PC-9 (cell line): ENCODE measurements at regions of chr7 and their contacts with region 1.

Region 1: GRCh38 chr7:155344600-155345433 is 47.1 kb downstream of the INSIG1 start:
- DNase-seq: peak; percentile 66 to 84
- H3K4me3 ChIP-seq: peak overlapping the region; percentile 37
- H3K27ac ChIP-seq: no peak overlapping the region
- H3K4me1 ChIP-seq: peaks cover 4% of the 10 kb centered on the region
- H3K27me3 ChIP-seq: peaks cover 50% of the 10 kb centered on the region
- CTCF ChIP-seq: peak; percentile 89

Region 2: GRCh38 chr7:154978017-154978416 is 366.8 kb before region 1 on chr7:
- CTCF ChIA-PET with region 1: interaction called, 10 read pairs
- POLR2A ChIA-PET with region 1: no interaction called
- intact Hi-C with region 1: no loop called
- DNase-seq: no peak
- H3K4me3 ChIP-seq: no peak overlapping the region
- H3K27ac ChIP-seq: no peak overlapping the region
- H3K4me1 ChIP-seq: no peaks in the 10 kb centered on the region
- H3K27me3 ChIP-seq: no peaks in the 10 kb centered on the region
- CTCF ChIP-seq: no peak

Region 3: GRCh38 chr7:155190688-155191087 is 154.1 kb before region 1 on chr7:
- CTCF ChIA-PET with region 1: interaction called, 15 read pairs
- POLR2A ChIA-PET with region 1: no interaction called
- intact Hi-C with region 1: loop called (anchors 1 kb)
- DNase-seq: peak in 1 of 2 experiments; percentile 72
- H3K4me3 ChIP-seq: no peak overlapping the region
- H3K27ac ChIP-seq: no peak overlapping the region
- H3K4me1 ChIP-seq: 0 out of 2 replicates have a peak, but pooled peaks cover 5% of the 10 kb centered on the region
- H3K27me3 ChIP-seq: peaks cover 49% of the 10 kb centered on the region
- CTCF ChIP-seq: peak; percentile 98

Region 4: GRCh38 chr7:155269766-155270585 is 74.8 kb before region 1 on chr7:
- CTCF ChIA-PET with region 1: interaction called, 18 read pairs
- POLR2A ChIA-PET with region 1: no interaction called
- intact Hi-C with region 1: no loop called
- DNase-seq: peak; percentile 72 to 94
- H3K4me3 ChIP-seq: no peak overlapping the region
- H3K27ac ChIP-seq: peak overlapping the region; percentile 63
- H3K4me1 ChIP-seq: peaks cover 22% of the 10 kb centered on the region
- H3K27me3 ChIP-seq: no peaks in the 10 kb centered on the region
- CTCF ChIP-seq: no peak

Region 5: DNA sequence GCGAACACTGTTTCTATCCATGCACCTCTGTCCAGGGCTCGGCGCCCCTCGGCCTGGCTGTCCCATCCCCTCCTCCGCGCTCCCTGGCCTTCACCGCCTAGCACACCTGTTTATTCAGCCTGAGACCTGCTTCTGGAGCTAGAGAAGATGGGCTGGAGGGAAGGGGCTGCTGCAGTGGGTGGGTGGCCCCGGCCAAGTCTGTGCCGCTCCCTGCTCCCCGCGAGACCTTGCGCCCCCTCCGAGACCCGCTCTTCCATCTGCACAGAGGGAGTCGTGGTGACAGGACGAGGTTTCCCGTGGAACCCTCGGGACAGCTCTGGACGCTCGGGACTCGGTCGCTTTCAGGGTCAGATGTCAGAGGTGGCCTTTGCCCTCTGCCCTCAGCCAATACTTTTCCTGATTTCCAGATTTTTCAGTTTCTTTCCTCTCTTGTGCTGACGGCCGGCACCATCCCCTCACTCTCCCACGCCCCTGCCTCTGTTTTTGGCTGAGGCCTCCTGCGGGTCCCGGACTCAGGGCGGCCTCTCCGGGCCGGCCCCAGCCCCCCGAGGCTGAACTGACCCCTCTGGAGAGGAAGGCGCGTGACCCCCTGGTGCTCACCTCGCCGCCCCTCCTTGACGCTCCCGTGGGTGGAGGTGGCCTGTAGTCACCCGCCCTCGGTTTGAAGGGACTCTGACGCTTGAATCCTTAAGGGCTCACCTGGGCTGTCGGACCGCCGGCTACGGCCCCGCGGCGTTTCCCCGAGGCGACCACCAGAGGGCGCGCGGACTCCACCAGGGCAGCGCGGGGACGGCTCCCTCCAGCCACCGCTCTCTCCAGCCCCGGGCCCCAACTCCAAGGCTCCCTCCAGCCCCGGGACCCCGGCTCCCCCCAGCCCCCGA is 451.8 kb after region 1 on chr7:
- CTCF ChIA-PET with region 1: interaction called, 16 read pairs
- POLR2A ChIA-PET with region 1: no interaction called
- intact Hi-C with region 1: no loop called
- DNase-seq: peak in 1 of 2 experiments; percentile 74
- H3K4me3 ChIP-seq: no peak overlapping the region
- H3K27ac ChIP-seq: no peak overlapping the region
- H3K4me1 ChIP-seq: no peaks in the 10 kb centered on the region
- H3K27me3 ChIP-seq: peaks cover 33% of the 10 kb centered on the region; the same call in 1 of the 2 replicates
- CTCF ChIP-seq: peak; percentile 83